Activated T-helper 2 cell treated with anti-CD3 and anti-CD28 coated beads, Interferon-gamma antibody, Interleukin-2, Interleukin-4, amounts not matched to agents 10 μg/mL and 5 μg/mL and 100 μg/mL, durations not matched to agents 14 hours and 24 hours and 36 hours (primary cell): ENCODE measurements at regions of chr3 and their contacts with region 1.

Region 1: GRCh38 chr3:15743587-15744009 is 54.2 kb downstream of the ANKRD28 start:
- DNase-seq: no peak
- H3K4me3 Mint-ChIP-seq: no peak overlapping the region
- H3K27ac Mint-ChIP-seq: peak overlapping the region; percentile 40
- H3K4me1 Mint-ChIP-seq: peaks cover 40% of the 10 kb centered on the region
- H3K27me3 Mint-ChIP-seq: no peaks in the 10 kb centered on the region

Region 2: GRCh38 chr3:15629860-15630597 is 113.6 kb before region 1 on chr3:
- intact Hi-C with region 1: loop called (anchors 1 kb)
- DNase-seq: peak; percentile 63
- H3K4me3 Mint-ChIP-seq: peak overlapping the region; percentile 6
- H3K27ac Mint-ChIP-seq: peak overlapping the region; percentile 64
- H3K4me1 Mint-ChIP-seq: peaks cover 52% of the 10 kb centered on the region
- H3K27me3 Mint-ChIP-seq: no peaks in the 10 kb centered on the region

Region 3: GRCh38 chr3:15726043-15726442 is 17.6 kb before region 1 on chr3:
- intact Hi-C with region 1: loop called (anchors 1 kb)
- DNase-seq: no peak
- H3K4me3 Mint-ChIP-seq: no peak overlapping the region
- H3K27ac Mint-ChIP-seq: peak overlapping the region; percentile 15
- H3K4me1 Mint-ChIP-seq: peaks cover 50% of the 10 kb centered on the region
- H3K27me3 Mint-ChIP-seq: no peaks in the 10 kb centered on the region

Region 4: DNA sequence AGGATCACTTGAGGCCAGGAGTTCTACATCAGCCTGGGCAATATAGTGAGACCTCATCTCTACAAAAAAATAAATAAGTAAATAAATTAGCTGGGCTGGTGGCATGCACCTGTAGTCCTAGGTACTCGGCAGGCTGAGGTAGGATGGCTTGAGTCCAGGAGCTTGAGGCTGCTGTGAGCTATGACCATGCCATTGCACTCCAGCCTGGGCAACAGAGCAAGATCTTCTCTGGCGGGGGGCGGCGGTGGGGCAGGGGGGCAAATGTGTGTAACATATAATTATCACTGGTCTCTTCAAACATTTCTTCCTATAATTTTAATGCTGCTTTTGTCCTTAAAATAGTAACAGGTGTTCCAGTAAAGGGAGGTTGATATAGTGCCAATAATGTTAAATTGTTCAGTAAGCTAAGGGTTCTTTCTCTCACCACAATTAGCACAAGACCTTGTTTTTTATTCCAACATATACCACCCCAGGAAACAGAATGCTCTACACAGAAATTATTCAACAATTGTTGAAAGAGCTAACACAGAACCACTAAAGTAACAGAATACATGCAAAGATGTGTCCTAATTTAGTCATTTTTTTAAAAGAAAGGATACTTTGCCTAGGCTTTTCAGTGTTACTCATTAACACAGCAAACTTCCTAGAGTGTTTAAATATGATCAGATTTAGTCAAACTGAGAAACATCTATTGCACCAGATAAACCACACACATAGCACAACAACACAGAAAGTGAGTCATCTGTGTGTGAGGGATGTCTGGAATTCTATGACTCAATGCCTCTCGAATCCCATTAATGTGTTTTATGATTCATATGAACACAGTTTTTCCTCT is 25.0 kb after region 1 on chr3:
- intact Hi-C with region 1: loop called (anchors 1 kb)
- DNase-seq: no peak
- H3K4me3 Mint-ChIP-seq: peak overlapping the region; percentile 31
- H3K27ac Mint-ChIP-seq: peak overlapping the region; percentile 65
- H3K4me1 Mint-ChIP-seq: peaks cover 54% of the 10 kb centered on the region
- H3K27me3 Mint-ChIP-seq: no peaks in the 10 kb centered on the region

Region 5: GRCh38 chr3:15805756-15806266 is 62.2 kb after region 1 on chr3:
- intact Hi-C with region 1: loop called (anchors 2 kb)
- DNase-seq: no peak
- H3K4me3 Mint-ChIP-seq: no peak overlapping the region
- H3K27ac Mint-ChIP-seq: peak overlapping the region; percentile 73
- H3K4me1 Mint-ChIP-seq: peaks cover 77% of the 10 kb centered on the region
- H3K27me3 Mint-ChIP-seq: no peaks in the 10 kb centered on the region